ENCODE measurements at regions of chr6 and their contacts with region 1.

Region 1: GRCh38 chr6:32894080-32895005 is 40.4 kb downstream of the PSMB9 start:
- DNase-seq: peak; percentile 83 to 97
- H3K4me3 ChIP-seq: peak overlapping the region; percentile 86
- H3K27ac ChIP-seq: peak overlapping the region; percentile 63
- H3K4me1 ChIP-seq: peaks cover 12% of the 10 kb centered on the region
- H3K27me3 ChIP-seq: no peaks in the 10 kb centered on the region
- CTCF ChIP-seq: no peak

Region 2: DNA sequence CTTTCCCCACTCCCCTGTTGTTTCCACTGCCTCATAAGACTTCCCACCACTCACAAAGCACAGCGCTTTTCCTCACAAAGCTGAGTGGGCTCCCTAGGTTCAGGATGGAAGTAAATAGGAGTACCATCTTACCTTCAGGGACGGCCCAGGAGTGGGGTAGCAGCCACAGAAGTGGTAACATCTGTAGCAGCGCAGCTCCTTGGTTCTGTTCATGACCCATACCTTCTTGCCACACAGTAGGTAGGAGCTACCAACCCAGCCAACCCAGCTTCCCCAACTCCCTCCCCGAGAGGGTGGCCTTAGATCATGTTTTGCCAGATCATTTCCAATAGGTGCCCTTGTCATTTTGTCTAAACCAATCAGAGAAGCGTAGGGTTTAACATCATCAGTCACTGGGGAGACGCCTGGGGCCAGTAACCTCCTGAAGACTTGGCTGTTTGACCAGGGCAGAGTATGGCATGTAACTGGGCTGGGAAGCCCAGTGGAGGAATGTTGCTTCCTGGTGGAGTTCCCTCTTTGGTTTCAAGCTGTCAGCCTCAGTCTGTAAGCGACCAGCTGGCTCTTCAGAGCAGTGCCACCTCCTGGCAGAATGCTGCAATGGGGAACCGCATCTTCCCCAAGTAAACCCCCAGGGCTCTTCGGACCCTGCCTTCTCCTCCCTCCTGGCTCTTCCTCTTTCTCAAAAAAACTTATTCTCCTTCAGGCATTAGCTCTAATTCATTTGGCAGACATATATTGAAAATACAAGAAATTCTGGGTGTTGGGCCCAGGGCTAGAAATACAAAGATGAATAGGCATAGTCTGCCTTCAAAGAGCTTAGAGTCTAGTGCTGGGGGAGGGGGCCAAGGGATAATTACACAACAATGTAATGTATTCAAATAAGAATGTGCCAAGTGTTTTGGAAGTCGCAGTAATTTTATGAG is 58.7 kb after region 1 on chr6 and contains the start of gene HLA-DMA:
- CTCF ChIA-PET with region 1: interaction called, 8 read pairs
- POLR2A ChIA-PET with region 1: interaction called, 10 read pairs
- intact Hi-C with region 1: loop called (anchors 2 kb)
- DNase-seq: peak; percentile 88 to 94
- H3K4me3 ChIP-seq: no peak within 1 kb of the TSS
- H3K27ac ChIP-seq: no peak within 1 kb of the TSS
- H3K4me1 ChIP-seq: peaks cover 4% of the 10 kb centered on the region
- H3K27me3 ChIP-seq: no peaks in the 10 kb centered on the region
- CTCF ChIP-seq: peak; percentile 81
- total RNA-seq, gene HLA-DMA: 18.3 and 22.1 TPM in 2 replicates

Region 3: DNA sequence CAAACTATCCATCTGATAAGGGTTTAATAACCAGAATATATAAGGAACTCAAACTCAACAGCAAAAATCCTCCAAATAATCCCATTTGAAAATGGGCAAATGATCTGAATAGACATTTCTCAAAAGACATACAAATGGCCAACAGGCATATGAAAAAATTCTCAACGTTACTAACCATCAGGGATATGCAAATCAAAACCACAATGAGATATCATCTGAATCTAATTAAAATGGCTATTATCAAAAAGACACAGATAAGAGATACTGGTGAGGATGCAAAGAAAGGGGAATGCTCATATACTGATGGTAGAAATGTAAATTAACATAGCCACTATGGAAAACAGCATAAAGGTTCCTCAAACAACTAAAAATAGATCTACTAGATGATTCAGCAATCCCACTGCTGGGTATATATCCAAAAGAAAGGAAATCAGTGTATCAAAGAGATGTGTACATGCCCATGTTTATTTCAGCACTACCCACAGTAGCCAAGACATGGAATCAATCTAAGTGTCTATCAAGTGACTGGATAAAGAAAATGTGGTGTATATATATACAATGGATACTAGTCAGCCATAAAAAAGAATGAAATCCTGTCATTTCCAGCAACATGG is 68.0 kb after region 1 on chr6:
- CTCF ChIA-PET with region 1: no interaction called
- POLR2A ChIA-PET with region 1: interaction called, 11 read pairs
- intact Hi-C with region 1: no loop called
- DNase-seq: no peak
- H3K4me3 ChIP-seq: no peak overlapping the region
- H3K27ac ChIP-seq: no peak overlapping the region
- H3K4me1 ChIP-seq: peaks cover 11% of the 10 kb centered on the region
- H3K27me3 ChIP-seq: no peaks in the 10 kb centered on the region
- CTCF ChIP-seq: no peak

Region 4: DNA sequence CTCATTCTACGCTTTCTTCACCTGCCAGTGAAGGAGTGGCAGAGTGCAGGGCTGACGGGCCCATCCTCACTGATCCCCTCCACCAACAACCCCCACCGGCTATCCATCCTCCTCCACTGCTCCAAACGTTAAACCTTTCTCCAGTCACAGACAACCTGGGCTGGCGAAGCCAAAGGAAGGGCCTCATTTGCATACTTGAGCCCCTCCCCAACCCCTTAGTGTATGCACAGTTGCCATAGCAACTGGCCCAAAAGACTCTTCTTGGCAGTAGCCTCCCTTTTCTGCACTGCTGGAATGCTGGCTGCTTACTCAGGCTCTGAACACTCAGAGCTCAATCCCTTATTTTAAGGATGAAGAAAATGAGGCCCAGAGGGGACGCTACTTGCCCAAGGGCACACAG is 1121.2 kb after region 1 on chr6:
- CTCF ChIA-PET with region 1: no interaction called
- POLR2A ChIA-PET with region 1: no interaction called
- intact Hi-C with region 1: no loop called
- DNase-seq: no peak
- H3K4me3 ChIP-seq: no peak overlapping the region
- H3K27ac ChIP-seq: no peak overlapping the region
- H3K4me1 ChIP-seq: no peaks in the 10 kb centered on the region
- H3K27me3 ChIP-seq: peaks cover 82% of the 10 kb centered on the region
- CTCF ChIP-seq: no peak

Measured in PC-9 (cell line).